PC-9 (cell line): ENCODE measurements at regions of chr17 and their contacts with region 1.

Region 1: DNA sequence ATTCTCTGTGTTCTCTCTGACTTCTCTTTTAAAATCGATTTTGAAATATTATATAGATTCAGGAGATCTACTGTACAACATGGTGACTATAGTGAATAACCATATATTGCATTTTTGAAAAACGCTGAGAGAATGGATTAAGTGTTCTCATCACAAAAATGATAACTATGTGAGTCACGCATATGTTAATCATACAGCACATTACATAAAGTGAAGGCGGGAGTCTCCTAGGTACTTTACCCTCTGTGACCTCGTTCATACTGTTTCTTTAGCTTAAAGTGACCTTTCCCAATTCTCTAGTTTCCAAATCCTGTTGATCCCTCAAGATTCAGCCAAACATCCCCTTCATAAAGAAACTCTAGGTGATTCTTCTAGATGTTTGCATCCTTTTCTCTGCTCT is 3.1 kb upstream of the KRTAP3-2 start:
- DNase-seq: no peak
- H3K4me3 ChIP-seq: no peak overlapping the region
- H3K27ac ChIP-seq: 0 out of 2 replicates have a peak overlapping the region, but pooled peaks have one; percentile 21
- H3K4me1 ChIP-seq: peaks cover 12% of the 10 kb centered on the region
- H3K27me3 ChIP-seq: no peaks in the 10 kb centered on the region
- CTCF ChIP-seq: no peak

Region 2: GRCh38 chr17:40433551-40434415 is 569.0 kb before region 1 on chr17:
- CTCF ChIA-PET with region 1: no interaction called
- POLR2A ChIA-PET with region 1: no interaction called
- intact Hi-C with region 1: no loop called
- DNase-seq: peak in 1 of 2 experiments; percentile 29
- H3K4me3 ChIP-seq: no peak overlapping the region
- H3K27ac ChIP-seq: no peak overlapping the region
- H3K4me1 ChIP-seq: no peaks in the 10 kb centered on the region
- H3K27me3 ChIP-seq: no peaks in the 10 kb centered on the region
- CTCF ChIP-seq: peak; percentile 62

Region 3: DNA sequence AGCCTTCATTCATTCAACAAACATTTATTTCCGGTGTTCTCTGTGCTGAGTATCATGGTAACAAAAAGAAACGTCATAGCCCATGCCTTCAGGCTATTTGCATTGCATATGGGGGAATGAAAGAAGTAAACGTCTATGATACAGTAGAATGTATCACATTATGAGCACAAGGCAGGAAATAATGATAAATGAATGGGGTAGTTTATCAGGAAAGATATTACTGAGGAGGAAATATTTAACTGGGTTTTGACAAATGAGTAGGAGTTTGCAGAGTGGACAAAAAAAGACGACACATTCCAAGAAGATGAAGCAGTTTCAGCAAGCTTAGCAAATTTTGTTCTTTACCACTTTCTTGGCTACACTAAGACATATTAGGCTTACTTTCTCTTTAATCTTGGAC is 79.8 kb after region 1 on chr17:
- CTCF ChIA-PET with region 1: no interaction called
- POLR2A ChIA-PET with region 1: no interaction called
- intact Hi-C with region 1: no loop called
- DNase-seq: peak in 1 of 2 experiments; percentile 49
- H3K4me3 ChIP-seq: no peak overlapping the region; the same call in 1 of the 2 replicates
- H3K27ac ChIP-seq: peak overlapping the region; percentile 69
- H3K4me1 ChIP-seq: peaks cover 35% of the 10 kb centered on the region
- H3K27me3 ChIP-seq: no peaks in the 10 kb centered on the region
- CTCF ChIP-seq: no peak

Region 4: DNA sequence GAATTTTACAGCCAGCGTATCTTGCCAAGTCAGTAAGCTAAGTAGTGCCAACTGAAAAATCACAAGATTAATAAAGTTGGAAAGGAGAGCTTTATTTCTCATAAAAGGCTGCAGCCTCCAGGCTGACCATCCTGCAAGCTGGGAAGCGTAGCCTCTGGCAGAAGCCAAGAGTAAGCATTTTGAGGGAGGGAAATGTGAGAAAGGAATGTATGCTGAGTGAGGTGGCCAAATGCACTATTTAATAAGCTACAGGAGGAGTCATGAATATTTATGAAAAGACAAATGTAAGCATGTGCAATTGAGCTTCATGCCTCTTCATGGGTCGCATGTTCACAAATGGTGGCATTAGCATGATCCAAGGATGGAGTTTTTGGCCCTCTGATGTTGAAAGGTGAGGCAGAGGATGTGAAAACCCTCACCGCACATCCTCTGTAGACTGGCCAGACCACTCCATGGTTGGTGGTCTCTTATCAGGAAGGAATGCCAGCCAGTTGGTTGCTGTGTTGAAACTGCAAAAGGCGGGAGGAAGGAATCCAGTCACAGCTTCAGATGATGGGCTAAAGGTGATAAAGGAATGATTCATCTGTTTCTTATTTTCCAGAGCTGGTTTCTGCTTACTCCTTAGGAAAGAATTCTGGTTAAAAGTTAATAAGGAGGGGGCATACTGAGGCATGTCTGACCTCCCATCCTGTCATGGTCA is 357.6 kb after region 1 on chr17:
- CTCF ChIA-PET with region 1: no interaction called
- POLR2A ChIA-PET with region 1: interaction called, 12 read pairs
- intact Hi-C with region 1: no loop called
- DNase-seq: peak; percentile 44 to 94
- H3K4me3 ChIP-seq: no peak overlapping the region
- H3K27ac ChIP-seq: peak overlapping the region; percentile 84
- H3K4me1 ChIP-seq: peaks cover 43% of the 10 kb centered on the region
- H3K27me3 ChIP-seq: no peaks in the 10 kb centered on the region
- CTCF ChIP-seq: no peak